ENCODE measurements at regions of chr11 and their contacts with region 1.

Region 1: DNA sequence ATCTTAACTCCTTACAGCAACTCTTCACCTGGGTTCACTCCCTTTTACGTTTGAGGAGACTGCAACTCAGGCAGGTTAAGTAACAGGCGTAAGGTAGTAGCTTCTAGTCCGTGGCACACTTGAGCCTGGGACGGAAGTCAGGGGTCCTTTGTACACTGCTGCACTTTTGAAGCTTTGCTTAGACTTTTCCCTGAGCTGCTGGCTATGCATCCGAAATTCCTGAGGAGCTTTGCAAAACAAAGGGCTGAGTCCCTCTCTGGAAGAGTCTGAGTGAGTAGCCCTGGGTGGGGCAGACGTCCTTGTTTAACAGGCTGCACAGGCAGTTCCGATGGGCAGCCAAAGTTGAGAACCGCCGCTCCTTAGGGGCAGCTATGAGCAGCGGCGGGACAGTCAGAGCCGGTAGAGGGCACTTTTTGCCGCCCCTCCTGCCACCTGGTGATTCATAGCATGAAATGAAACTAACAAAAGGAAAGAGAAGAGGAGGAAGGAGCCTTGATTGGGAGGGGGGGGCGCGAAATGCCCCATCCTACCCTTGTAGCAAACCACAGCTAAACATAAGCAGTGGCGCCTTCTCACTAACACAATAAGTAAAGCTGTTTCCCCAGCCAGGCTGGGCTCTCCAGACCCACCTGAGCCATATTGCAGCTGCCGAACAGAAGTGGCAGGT is 1.4 kb downstream of the TMEM109 start:
- DNase-seq: peak; percentile 48 to 89
- H3K4me3 ChIP-seq: peak overlapping the region; percentile 70 to 96
- H3K27ac ChIP-seq: peak overlapping the region; percentile 89 to 97
- H3K4me1 ChIP-seq: peaks cover 0 to 28% of the 10 kb centered on the region in 2 donors
- H3K27me3 ChIP-seq: no peaks in the 10 kb centered on the region
- CTCF ChIP-seq: peak; percentile 22 to 49 (median 26)

Region 2: GRCh38 chr11:60589607-60590006 is 325.8 kb before region 1 on chr11:
- intact Hi-C with region 1: no loop called
- DNase-seq: no peak
- H3K4me3 ChIP-seq: no peak overlapping the region
- H3K27ac ChIP-seq: no peak overlapping the region
- H3K4me1 ChIP-seq: no peaks in the 10 kb centered on the region
- H3K27me3 ChIP-seq: no peaks in the 10 kb centered on the region
- CTCF ChIP-seq: no peak

Region 3: DNA sequence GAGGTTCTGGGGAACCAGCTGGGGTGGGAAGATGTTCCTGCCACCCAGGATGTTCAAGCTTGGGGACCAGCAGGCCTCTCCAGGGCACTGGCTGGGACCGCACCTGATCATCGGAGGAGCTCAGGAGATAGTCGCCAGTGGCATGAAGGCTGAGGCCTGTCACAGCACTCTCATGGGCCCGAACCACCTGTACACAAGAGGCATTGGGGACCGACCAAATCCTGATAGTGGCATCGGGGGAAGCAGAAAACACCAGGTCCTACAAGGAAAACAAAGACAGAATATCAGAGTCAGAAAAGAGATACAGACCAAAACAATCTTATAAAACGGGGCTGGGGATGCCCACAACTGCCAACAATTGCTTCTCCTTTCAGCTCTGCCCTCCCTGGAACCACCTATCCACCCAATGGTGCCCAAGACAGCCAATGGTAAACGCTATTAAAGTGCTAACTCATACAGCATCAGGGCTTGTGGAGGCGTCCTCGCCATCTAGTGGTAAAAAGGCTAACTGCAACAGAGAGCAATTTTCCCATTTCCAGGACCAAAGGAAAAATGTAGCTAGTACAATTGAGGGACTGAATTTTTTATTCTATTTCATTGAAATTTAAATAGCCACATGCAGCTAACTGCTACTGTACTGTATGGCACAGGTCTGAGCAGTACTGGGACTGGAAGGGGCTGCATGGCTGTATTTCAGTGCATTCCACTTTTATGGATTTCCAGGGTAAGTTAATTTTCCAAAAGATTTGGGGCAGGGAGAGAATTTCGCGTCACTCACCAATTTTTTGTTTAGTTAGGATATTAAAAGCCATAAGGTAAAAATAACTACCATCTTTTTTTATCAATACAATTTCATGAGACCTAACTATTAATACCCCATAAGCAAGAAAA is 16.1 kb before region 1 on chr11:
- intact Hi-C with region 1: no loop called
- DNase-seq: no peak
- H3K4me3 ChIP-seq: no peak overlapping the region
- H3K27ac ChIP-seq: no peak overlapping the region
- H3K4me1 ChIP-seq: no peaks in the 10 kb centered on the region
- H3K27me3 ChIP-seq: no peaks in the 10 kb centered on the region
- CTCF ChIP-seq: peak; percentile 70 to 97 (median 95)

Region 4: DNA sequence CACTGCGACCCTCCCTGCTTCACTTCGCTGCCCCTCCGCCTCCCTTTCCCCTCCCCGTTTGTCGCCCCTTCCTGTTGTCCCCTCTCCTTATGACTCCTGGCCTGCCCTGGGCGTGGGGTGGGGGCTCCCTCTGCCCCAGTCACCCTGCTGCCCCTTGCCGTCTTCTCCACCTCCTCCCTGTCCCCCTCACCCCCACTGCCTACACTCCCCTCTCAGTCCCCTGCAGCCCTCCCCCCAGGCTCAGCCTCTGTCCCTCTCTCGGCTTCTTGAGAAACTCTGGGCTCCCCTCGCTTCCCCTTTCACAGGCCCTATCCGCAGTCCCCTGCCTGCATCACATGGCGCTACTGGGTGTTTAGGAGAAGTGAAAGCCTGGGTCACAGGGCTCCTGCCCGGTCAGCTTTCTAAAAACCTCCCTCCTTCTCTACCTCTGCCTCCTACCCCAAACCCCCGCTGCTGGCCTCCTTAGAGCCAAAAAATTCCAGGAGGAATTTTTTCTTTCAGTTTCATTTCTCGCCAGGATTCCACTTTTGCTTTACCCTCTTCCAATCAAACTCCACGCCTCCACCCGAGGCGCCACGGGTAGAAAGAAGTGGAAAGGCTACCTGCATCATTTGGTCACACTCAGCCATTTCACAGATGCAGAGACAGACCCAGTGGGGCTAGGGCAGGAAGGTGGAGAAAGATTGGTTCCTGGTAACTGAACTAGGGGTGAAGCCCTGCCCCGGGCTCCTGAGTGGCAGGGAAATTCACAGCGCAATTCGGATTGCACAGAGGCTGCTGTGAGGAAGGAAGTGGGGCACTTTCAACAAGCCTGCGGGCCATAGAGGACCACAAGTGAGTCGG is 36.7 kb after region 1 on chr11 and contains the start of gene SLC15A3:
- intact Hi-C with region 1: loop called (anchors 5 kb)
- DNase-seq: peak; percentile 76 to 84
- H3K4me3 ChIP-seq: peak within 1 kb of the TSS; percentile 56 to 78
- H3K27ac ChIP-seq: peak within 1 kb of the TSS; percentile 78 to 82
- H3K4me1 ChIP-seq: peaks cover 5 to 6% of the 10 kb centered on the region in 2 donors
- H3K27me3 ChIP-seq: no peaks in the 10 kb centered on the region
- CTCF ChIP-seq: no peak
- total RNA-seq, gene SLC15A3: 27.1 TPM

Region 5: GRCh38 chr11:61129639-61130523 is 214.5 kb after region 1 on chr11:
- intact Hi-C with region 1: loop called (anchors 5 kb)
- DNase-seq: peak; percentile 38 to 91
- H3K4me3 ChIP-seq: peak overlapping the region; percentile 23 to 24
- H3K27ac ChIP-seq: peak overlapping the region; percentile 37 to 64
- H3K4me1 ChIP-seq: peaks cover 5 to 12% of the 10 kb centered on the region in 2 donors
- H3K27me3 ChIP-seq: no peaks in the 10 kb centered on the region
- CTCF ChIP-seq: peak; percentile 99 to 100 (median 99)